Sciatic nerve (tissue), 2 donors: ENCODE measurements at regions of chr6 and their contacts with region 1.

Region 1: GRCh38 chr6:11952316-11952715 is 59.8 kb upstream of the HIVEP1 start:
- DNase-seq: no peak
- ATAC-seq: no peak

Region 2: GRCh38 chr6:11890849-11891248 is 61.5 kb before region 1 on chr6:
- intact Hi-C with region 1: loop called (anchors 2 kb)
- DNase-seq: no peak
- ATAC-seq: no peak

Region 3: GRCh38 chr6:12008366-12009179 is 56.3 kb after region 1 on chr6:
- intact Hi-C with region 1: no loop called
- DNase-seq: peak; percentile 91
- ATAC-seq: peak; percentile 48